ENCODE measurements at regions of chr19 and their contacts with region 1.

Region 1: GRCh38 chr19:5142370-5143029 is 173.6 kb downstream of the KDM4B start:
- DNase-seq: peak in 2 of 10 donors; percentile 3 to 44
- ATAC-seq: no peak
- H3K4me3 Mint-ChIP-seq: peak overlapping the region in 4 of 10 donors; percentile 6 to 48 (median 36)
- H3K27ac Mint-ChIP-seq: peak overlapping the region in 6 of 10 donors; percentile 44 to 90 (median 72)
- H3K4me1 Mint-ChIP-seq: peaks cover 22 to 59% (median 39%) of the 10 kb centered on the region in 4 donors
- H3K27me3 Mint-ChIP-seq: peaks cover 0 to 4% (median 0%) of the 10 kb centered on the region in 5 donors

Region 2: GRCh38 chr19:4831304-4831978 is 311.1 kb before region 1 on chr19 and contains the start of gene TICAM1:
- POLR2A ChIA-PET with region 1: no interaction called
- DNase-seq: peak; percentile 48 to 83 (median 72)
- ATAC-seq: peak; percentile 93 to 95
- H3K4me3 Mint-ChIP-seq: peak within 1 kb of the TSS; percentile 84 to 96 (median 91)
- H3K27ac Mint-ChIP-seq: peak within 1 kb of the TSS; percentile 80 to 98 (median 93)
- H3K4me1 Mint-ChIP-seq: peaks cover 16 to 35% (median 28%) of the 10 kb centered on the region in 4 donors
- H3K27me3 Mint-ChIP-seq: no peaks in the 10 kb centered on the region
- polyA plus RNA-seq, gene TICAM1: 2.4 to 8.5 (median 3.3) TPM

Region 3: DNA sequence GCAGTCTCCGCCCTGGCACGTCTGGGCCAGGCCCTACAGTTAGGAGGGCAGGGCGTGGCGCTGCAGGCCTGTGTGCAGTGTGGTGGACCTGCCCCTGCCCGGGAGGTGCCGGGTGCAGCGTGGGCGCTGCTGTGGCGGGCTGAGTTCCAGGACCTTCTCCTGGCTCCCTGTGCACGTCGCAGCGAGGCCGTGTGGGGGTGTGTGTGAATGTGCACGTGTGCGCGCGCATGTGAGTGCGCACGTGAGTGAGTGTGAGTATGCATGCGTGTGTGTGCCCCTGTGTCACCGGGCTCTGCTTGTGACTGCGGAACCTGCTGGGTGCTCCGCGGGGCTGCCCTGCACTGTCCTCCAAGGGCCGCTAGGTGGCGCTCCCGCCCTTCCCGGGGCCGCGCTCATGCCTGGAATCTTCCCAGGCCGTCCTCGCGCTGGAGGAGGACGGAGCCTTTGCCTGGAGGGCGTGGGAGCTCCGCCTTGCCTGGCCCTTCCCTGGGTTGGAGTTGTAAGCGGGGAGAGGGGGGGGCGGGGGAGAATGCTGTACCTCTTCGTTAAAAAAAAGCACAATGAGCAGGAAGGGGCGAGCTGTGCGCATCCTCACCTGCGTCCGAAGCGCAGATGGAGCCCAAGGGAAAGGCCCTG is 94.3 kb before region 1 on chr19:
- POLR2A ChIA-PET with region 1: no interaction called
- DNase-seq: peak; percentile 39 to 77 (median 58)
- ATAC-seq: peak; percentile 82 to 83
- H3K4me3 Mint-ChIP-seq: no peak overlapping the region
- H3K27ac Mint-ChIP-seq: peak overlapping the region in 2 of 10 donors; percentile 53 to 63
- H3K4me1 Mint-ChIP-seq: peaks cover 0 to 8% (median 5%) of the 10 kb centered on the region in 4 donors
- H3K27me3 Mint-ChIP-seq: no peaks in the 10 kb centered on the region

Region 4: DNA sequence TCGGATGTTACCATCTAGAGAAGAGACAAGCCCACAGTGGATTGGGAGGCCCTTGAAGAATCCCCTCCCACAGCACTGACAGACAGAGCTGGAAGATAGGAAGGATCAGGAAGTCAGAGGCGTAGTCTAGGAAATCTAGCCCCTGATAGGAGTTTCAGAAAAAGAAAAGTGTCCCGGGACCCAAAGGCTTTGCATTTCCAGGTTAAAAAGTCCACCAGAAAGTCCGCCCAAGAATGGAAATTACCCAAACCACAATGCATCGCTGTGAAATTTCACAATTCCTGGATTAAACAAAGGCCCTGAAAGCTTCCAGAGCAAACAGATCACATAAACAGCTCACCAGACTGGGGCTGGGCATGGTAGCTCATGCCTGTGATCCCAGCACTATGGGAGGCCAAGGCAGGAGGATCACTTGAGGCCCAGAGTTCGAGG is 26.7 kb before region 1 on chr19:
- POLR2A ChIA-PET with region 1: interaction called, 10 read pairs
- DNase-seq: no peak
- ATAC-seq: no peak
- H3K4me3 Mint-ChIP-seq: no peak overlapping the region
- H3K27ac Mint-ChIP-seq: peak overlapping the region in 1 of 10 donors; percentile 82
- H3K4me1 Mint-ChIP-seq: peaks cover under 1 to 9% (median 3%) of the 10 kb centered on the region in 4 donors
- H3K27me3 Mint-ChIP-seq: no peaks in the 10 kb centered on the region

Measured in naive thymus-derived CD8-positive, alpha-beta T cell (primary cell).